ENCODE measurements at regions of chr2 and their contacts with region 1.

Region 1: GRCh38 chr2:85707304-85707703 is 13.1 kb downstream of the GNLY start:
- DNase-seq: peak; percentile 76
- H3K4me3 Mint-ChIP-seq: peak overlapping the region; percentile 50
- H3K27ac Mint-ChIP-seq: peak overlapping the region; percentile 94
- H3K4me1 Mint-ChIP-seq: peaks cover 79% of the 10 kb centered on the region
- H3K27me3 Mint-ChIP-seq: no peaks in the 10 kb centered on the region

Region 2: DNA sequence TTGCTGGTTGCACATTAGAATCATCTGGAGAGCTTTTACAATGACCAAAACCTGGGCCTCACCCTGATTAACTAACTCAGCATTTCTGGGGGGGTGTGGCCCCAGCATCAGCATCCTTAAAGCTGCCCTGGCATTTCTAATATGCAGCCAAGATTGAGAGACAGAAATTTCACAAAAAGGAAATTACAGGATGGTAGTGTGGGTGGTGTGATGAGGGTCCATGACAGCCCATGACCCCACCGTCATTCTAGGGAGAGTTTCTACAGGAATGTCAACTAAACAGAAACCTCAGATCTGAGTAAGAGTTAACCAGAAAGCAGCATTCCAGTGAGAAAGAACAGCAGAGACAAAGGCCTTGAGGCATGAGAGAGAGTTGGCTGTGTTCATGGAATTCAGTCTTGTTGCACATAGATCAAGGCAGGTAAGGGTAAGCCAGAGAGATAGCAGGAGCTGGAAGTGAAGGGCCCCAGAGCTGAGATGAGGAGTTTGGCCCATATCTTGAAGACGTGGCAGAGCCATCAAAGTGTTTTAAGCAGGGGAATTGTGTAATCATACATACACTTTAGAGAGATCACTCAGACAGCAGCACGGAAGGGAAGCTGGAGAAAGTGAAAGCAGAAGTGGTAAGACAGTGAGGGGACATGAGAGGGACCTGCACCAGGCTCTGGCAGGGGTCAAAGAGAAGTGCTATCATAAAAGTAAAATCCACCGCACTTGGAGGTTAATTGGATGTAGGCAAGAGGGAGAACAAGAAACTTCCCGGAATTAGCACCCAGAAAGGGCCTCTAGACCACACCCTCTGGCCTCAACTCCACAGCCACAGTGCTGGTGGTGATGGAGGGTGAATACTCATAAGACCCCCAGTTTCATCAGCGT is 818.7 kb before region 1 on chr2:
- intact Hi-C with region 1: no loop called
- DNase-seq: peak; percentile 57
- H3K4me3 Mint-ChIP-seq: peak overlapping the region; percentile 62
- H3K27ac Mint-ChIP-seq: peak overlapping the region; percentile 97
- H3K4me1 Mint-ChIP-seq: peaks cover 69% of the 10 kb centered on the region
- H3K27me3 Mint-ChIP-seq: no peaks in the 10 kb centered on the region

Region 3: GRCh38 chr2:85437488-85438284 is 269.6 kb before region 1 on chr2:
- intact Hi-C with region 1: no loop called
- DNase-seq: peak; percentile 66
- H3K4me3 Mint-ChIP-seq: peak overlapping the region; percentile 88
- H3K27ac Mint-ChIP-seq: peak overlapping the region; percentile 97
- H3K4me1 Mint-ChIP-seq: peaks cover 26% of the 10 kb centered on the region
- H3K27me3 Mint-ChIP-seq: peaks cover 1% of the 10 kb centered on the region

Region 4: DNA sequence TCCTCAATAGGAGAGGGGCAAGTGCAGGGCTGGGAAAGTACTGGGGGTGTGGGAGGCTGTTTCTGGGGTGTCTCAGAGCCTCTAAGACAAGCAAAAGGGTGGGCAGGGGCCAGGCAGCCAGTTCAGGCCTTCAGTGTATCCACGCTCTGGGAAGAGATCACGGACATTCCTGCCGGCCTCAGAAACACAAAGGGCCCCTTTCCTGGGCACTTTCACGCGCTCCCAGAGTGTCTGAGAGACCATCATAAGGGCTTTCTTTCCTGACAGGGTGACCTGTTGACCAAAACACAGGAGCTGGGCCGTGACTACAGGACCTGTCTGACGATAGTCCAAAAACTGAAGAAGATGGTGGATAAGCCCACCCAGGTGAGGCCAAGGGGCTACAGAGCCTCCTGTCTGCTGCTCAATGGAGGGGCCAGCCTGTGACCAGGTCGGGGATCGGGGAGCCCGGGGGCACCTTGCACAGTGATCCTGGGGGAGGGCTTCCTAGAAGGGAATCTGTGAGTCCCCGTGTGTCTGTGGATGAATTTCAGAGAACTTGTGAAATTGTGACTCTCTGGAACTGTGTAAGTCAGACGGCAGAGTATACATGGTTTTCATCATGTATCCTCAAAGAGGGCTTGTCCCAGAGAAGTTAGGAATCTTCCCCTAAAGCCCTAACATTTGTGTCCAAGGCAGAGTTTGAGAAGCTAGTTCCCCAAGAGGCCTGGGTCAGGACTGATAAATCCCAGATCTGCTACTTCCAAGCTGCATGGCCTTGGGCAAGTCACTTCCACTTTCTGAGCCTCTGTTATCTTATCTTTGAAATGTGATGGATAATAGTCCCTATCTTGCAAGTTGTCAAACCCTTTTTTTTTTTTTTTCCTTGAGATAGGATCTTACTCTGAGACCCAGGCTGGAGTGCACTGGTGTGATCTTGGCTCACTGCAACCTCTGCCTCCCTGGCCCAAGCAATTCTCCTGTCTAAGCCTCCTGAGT is 11.3 kb before region 1 on chr2:
- intact Hi-C with region 1: loop called (anchors 1 kb)
- DNase-seq: no peak
- H3K4me3 Mint-ChIP-seq: peak overlapping the region; percentile 9
- H3K27ac Mint-ChIP-seq: peak overlapping the region; percentile 48
- H3K4me1 Mint-ChIP-seq: peaks cover 19% of the 10 kb centered on the region
- H3K27me3 Mint-ChIP-seq: peaks cover 2% of the 10 kb centered on the region

Measured in activated T-helper 1 cell treated with anti-CD3 and anti-CD28 coated beads, Interleukin-12 subunit alpha, Interleukin-12 subunit beta, Interleukin-2, Interleukin-4 antibody, amounts not matched to agents 30 ng/mL and 10 ng/mL and 1 ng/mL, durations not matched to agents 14 hours and 24 hours and 36 hours (primary cell).